BJ (cell line): ENCODE measurements at regions of chr19 and their contacts with region 1.

Region 1: GRCh38 chr19:35140962-35141637 is 2.0 kb upstream of the FXYD7 start:
- DNase-seq: no peak
- H3K4me3 ChIP-seq: no peak overlapping the region
- H3K27me3 ChIP-seq: peaks cover 2% of the 10 kb centered on the region
- CTCF ChIP-seq: peak; percentile 72

Region 2: GRCh38 chr19:35114353-35115176 is 26.5 kb before region 1 on chr19:
- CTCF ChIA-PET with region 1: interaction called, 59 read pairs
- POLR2A ChIA-PET with region 1: no interaction called
- DNase-seq: no peak
- H3K4me3 ChIP-seq: no peak overlapping the region
- H3K27me3 ChIP-seq: peaks cover 10% of the 10 kb centered on the region
- CTCF ChIP-seq: peak; percentile 99

Region 3: DNA sequence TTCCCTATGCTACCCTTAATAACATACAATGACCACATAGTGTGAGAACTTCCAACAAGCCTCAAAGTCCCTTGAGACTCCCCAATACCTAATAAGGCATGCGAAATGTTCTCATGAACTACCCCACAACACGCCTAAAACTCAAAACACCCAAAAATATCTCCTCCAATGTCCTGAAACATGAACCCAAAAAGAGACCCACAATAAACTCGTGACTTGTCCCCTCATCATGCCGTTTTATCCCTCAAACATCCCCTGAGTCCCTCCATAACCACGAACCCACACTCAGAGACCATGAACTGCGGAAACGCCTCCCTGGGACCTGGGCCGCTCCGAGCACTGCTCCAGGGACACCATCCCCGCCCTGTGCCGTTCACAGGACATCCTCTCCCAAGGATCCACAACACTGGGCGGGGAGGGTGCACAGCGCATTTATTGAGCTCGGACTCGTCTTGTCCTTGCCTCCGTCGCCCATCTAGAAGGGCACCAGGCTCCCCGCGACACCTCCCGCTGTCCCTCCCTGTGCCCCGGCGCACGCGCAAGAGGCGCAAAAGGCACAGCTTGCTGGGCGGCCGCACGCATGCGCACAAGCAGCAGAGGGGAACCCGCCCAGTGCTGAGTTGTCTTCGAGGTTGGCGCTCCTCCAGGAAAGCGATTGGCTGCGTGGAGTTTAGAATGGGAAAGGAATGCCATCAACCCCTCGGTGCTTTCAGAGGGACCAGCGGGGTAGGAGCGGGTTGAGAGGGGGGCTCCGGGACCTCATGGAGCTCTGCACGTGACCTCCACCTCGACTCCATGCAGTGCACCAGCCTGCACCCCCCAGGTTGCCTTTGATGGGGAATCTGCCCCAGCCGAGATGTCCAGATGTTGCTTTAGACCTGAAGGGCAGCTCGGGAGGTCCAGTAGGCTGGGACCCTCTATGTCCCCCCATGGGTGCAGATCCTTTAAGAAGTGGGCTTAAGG is 16.7 kb before region 1 on chr19:
- CTCF ChIA-PET with region 1: interaction called, 26 read pairs
- POLR2A ChIA-PET with region 1: interaction called, 18 read pairs
- DNase-seq: peak; percentile 53
- H3K4me3 ChIP-seq: peak overlapping the region; percentile 52
- H3K27me3 ChIP-seq: no peaks in the 10 kb centered on the region; the same call in 1 of the 2 replicates
- CTCF ChIP-seq: no peak

Region 4: DNA sequence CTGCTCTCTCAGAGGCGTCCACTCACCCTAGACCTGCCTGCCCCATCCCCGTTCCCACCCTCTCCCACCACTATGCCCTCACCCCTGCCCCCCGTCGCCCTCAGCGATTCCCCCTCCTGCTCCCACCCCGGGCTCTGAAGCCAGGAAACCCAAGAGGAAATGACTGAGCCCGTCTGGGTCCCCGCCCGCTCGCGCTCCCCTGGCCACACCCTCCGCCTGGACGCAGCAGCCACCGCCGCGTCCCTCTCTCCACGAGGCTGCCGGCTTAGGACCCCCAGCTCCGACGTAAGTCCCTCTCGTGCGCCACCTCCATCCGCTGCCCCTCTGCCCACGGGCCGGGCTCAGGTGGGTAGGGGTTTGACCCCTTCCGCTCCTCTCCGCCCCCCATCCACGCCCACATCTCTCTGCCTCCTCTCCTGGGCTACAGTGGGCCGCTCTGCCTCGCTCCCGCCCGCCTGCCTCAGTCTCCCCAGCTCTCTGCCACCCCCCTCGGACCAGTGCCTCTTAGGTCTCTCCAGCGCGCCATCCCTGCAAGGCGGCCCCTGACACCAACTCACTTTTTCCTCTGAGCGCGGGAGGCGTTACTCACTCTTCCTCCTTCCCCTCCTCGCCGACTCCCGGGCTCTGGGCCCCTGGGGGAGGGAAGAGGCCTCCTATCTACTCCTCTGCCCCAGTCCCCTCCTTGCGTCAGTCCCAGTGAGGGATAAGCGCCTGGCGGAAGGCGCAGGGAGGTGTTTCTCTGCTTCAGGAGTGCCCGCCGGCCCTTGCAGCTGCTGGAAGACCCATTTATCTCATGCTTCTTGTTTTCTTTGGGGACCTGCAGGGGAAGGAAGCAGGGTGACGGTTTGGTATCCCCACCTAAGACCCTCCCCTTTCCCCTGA is 13.7 kb after region 1 on chr19 and contains the start of gene FXYD5:
- CTCF ChIA-PET with region 1: interaction called, 36 read pairs
- POLR2A ChIA-PET with region 1: no interaction called
- DNase-seq: no peak
- H3K4me3 ChIP-seq: peak within 1 kb of the TSS; percentile 84
- H3K27me3 ChIP-seq: no peaks in the 10 kb centered on the region
- CTCF ChIP-seq: peak; percentile 17; the same call in 1 of the 2 replicates
- polyA plus RNA-seq, gene FXYD5: 248 and 332 TPM in 2 replicates

Region 5: DNA sequence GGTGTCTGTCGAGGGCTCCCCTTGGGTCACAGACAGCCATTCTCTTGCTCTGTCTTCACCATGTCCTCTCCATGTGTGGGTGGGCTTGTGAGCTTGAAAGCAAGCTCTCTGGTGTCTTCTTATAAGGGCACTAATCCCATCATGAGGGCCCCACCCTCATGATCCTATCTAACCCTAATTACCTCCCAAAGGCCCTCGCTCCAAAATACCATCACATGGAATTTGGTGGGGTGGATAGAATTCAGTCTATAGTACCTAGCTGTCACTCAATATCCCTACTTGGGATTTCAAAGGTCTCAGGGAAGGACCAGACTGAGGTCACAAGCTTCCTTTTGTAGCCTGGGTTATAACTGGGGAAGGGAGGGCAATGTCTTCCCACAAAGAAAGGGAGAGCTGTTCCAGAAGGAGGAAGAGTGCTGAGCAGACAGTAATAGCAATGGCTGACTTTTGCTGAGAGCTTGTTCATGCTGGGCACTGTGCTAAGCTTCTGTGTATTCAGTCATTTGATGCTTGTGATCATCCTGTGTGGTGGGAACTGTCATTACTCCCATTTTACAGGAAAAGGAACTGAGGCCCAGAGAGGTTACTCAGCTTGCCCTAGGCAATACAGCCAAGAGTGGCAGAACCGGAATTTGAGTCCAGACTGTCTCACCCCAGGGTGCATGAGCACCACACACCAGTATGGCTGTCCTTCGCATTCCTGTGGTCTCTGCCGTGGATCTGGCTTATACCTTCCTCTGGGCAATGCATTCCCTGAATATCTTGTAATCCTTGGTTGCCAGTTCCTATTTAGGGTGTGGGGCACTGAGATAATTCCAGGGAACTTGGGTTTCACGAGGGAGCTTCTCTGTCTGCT is 21.6 kb after region 1 on chr19:
- CTCF ChIA-PET with region 1: interaction called, 10 read pairs
- POLR2A ChIA-PET with region 1: interaction called, 7 read pairs
- DNase-seq: no peak
- H3K4me3 ChIP-seq: no peak overlapping the region
- H3K27me3 ChIP-seq: no peaks in the 10 kb centered on the region
- CTCF ChIP-seq: no peak

Region 6: DNA sequence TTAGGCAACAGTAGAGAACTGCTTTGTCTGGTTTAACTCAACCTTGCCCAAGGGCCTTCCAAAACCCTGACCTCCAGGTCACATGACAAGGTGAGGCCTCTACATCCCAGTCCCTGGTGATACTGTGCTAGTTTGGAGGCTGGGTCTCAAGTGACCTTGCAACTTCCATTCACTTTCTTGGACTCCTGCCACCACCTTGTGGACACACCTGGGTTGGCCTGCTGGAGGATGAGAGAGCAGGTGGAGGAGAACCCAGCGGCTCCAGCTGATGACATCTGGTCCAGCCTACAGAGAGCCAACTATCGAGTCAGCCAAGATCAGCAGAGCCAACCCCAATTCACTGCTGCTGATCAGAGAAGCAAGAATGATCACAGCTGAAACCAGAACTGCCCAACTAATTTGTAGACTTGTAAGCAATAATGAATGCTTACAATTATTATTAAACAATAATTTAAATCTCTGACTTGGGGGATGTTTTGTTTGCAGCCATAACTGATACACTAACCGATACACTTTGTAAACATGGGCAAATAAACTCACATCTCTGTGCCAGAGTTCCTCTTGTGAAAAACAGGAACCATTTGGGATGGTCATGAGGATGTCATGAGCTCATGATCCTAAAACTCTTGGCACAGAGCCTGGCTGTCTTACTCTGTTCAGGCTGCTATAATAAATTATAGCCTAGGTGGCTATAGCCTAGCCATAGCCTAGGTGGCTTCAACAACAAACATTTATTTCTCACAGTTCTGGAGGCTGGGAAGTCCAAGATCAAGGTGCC is 76.0 kb after region 1 on chr19:
- CTCF ChIA-PET with region 1: no interaction called
- POLR2A ChIA-PET with region 1: no interaction called
- DNase-seq: no peak
- H3K4me3 ChIP-seq: no peak overlapping the region
- H3K27me3 ChIP-seq: no peaks in the 10 kb centered on the region; the same call in 1 of the 2 replicates
- CTCF ChIP-seq: no peak

Region 7: DNA sequence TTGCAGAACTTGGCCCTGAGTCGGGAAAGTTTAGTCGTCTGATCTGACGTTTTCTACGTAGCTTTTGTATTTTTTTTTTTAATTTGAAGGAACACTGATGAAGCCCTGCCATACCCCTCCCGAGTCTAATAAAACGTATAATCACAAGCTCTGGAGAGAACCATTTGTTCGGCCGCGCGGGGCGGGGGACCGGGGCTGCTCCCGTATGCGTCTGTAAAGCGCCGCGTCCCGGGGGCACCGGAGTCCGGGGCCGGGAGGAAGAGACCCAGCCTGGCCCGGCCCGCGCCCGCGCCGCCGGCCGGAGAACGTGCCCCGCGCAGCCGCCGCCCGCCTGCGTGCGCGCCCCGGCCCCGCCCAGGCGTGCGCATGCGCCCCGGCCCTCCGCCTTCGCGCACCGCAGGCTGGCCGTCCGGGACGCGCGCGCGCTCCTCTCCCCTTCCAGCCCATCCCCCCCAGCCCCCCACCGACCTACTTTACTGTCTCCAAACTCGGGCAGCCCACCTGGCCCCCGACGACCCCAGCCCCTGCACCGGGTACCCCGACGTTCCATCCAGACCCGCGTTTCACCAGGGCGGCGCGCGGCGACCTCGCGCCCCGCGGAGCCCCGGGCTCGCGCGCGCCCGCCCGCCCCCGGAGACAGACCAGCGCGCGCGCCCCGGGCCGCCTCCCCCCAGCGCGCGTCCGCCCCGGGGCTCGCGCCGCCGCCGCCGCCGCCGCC is 126.9 kb after region 1 on chr19:
- CTCF ChIA-PET with region 1: interaction called, 7 read pairs
- POLR2A ChIA-PET with region 1: interaction called, 14 read pairs
- DNase-seq: no peak
- H3K4me3 ChIP-seq: peak overlapping the region; percentile 66
- H3K27me3 ChIP-seq: no peaks in the 10 kb centered on the region
- CTCF ChIP-seq: no peak